Left cardiac atrium (tissue), 4 donors: ENCODE measurements at regions of chr7 and their contacts with region 1.

Region 1: GRCh38 chr7:114979388-114979787 is 57.5 kb downstream of the MDFIC start:
- DNase-seq: peak; percentile 66
- ATAC-seq: peak; percentile 89 to 98

Region 2: GRCh38 chr7:114922016-114922651 is 57.3 kb before region 1 on chr7 and contains the start of gene MDFIC:
- intact Hi-C with region 1: loop called in 1 of 2 experiments (anchors 5 kb)
- DNase-seq: peak; percentile 74
- ATAC-seq: peak; percentile 88 to 92
- total RNA-seq, gene MDFIC: 21.8 to 23.9 TPM

Region 3: DNA sequence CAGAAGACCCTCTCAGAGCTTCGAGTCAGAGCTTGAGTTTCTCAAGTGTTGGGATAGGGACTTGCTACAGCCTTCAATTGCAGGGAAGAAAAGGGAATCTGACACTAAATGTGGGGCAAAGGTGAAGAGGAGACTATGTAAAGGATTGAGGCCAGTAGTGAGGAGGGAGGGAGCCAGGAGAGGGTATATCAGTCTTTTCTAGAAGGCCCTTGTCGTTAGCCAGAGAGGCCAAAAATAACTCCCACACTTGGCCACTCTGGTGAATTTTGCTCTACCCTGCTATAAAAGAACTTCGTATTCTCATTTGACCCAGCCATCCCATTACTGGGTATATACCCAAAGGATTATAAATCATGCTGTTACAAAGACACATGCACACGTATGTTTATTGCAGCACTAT is 104.5 kb after region 1 on chr7:
- intact Hi-C with region 1: loop called in 1 of 2 experiments (anchors 5 kb)
- DNase-seq: no peak
- ATAC-seq: no peak

Region 4: GRCh38 chr7:115271332-115272235 is 292.2 kb after region 1 on chr7:
- intact Hi-C with region 1: no loop called
- DNase-seq: no peak
- ATAC-seq: no peak